Activated B cell treated with CpG ODN at 0.5 μM for 24 hours (primary cell): ENCODE measurements at regions of chr18 and their contacts with region 1.

Region 1: GRCh38 chr18:27461957-27462356 is 276.8 kb upstream of the CHST9 start:
- DNase-seq: no peak
- ATAC-seq: no peak
- H3K4me3 Mint-ChIP-seq: no peak overlapping the region
- H3K27ac Mint-ChIP-seq: no peak overlapping the region
- H3K4me1 Mint-ChIP-seq: no peaks in the 10 kb centered on the region
- H3K27me3 Mint-ChIP-seq: no peaks in the 10 kb centered on the region
- CTCF ChIP-seq: no peak

Region 2: DNA sequence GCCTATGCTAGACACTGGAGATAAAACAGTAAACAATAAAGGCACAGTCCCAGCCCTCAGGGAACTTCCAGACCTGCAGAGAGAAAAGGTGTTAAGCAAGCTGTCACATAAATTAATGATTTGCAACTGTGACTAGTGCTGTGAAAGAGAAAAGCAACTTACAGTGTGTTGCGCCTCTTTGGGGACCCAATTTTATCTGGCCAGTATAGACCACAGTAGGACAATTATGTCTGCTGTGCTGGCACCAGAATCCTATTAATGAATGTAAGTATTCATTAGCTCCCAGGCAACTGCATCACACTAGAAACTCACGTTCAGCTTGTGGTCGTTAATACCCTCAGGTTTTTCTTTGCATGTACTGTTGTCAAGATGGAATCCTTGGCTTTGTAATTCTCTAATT is 221.6 kb before region 1 on chr18:
- CTCF ChIA-PET with region 1: no interaction called
- POLR2A ChIA-PET with region 1: no interaction called
- intact Hi-C with region 1: no loop called
- DNase-seq: no peak
- ATAC-seq: no peak
- H3K4me3 Mint-ChIP-seq: no peak overlapping the region
- H3K27ac Mint-ChIP-seq: no peak overlapping the region
- H3K4me1 Mint-ChIP-seq: no peaks in the 10 kb centered on the region
- H3K27me3 Mint-ChIP-seq: no peaks in the 10 kb centered on the region
- CTCF ChIP-seq: no peak

Region 3: DNA sequence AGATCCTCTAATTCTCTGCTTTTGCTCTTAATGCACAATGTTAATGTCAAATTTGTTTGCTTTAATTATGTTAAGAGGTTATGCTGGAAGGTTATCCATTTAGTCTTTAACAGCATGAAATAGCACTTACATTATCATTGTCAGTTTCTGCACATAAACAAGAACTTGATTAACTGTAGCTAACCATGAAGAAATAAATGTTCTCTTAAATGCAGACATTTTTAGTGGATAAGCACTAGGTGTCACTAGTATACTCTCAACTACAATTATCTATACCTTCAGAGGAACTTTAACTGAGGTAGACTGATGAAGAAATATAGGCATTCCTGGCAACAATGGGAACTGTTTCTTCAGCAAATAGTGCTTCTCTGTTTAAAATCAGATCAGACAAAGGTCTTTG is 98.1 kb before region 1 on chr18:
- CTCF ChIA-PET with region 1: no interaction called
- POLR2A ChIA-PET with region 1: no interaction called
- intact Hi-C with region 1: loop called (anchors 10 kb)
- DNase-seq: no peak
- ATAC-seq: no peak
- H3K4me3 Mint-ChIP-seq: no peak overlapping the region
- H3K27ac Mint-ChIP-seq: no peak overlapping the region
- H3K4me1 Mint-ChIP-seq: no peaks in the 10 kb centered on the region
- H3K27me3 Mint-ChIP-seq: no peaks in the 10 kb centered on the region
- CTCF ChIP-seq: no peak